Activated CD4-positive, alpha-beta T cell treated with anti-CD3 and anti-CD28 coated beads, Interleukin-2, amount 10 ng/mL, durations not matched to agents 24 days and 14 days (primary cell): ENCODE measurements at regions of chr14 and their contacts with region 1.

Region 1: DNA sequence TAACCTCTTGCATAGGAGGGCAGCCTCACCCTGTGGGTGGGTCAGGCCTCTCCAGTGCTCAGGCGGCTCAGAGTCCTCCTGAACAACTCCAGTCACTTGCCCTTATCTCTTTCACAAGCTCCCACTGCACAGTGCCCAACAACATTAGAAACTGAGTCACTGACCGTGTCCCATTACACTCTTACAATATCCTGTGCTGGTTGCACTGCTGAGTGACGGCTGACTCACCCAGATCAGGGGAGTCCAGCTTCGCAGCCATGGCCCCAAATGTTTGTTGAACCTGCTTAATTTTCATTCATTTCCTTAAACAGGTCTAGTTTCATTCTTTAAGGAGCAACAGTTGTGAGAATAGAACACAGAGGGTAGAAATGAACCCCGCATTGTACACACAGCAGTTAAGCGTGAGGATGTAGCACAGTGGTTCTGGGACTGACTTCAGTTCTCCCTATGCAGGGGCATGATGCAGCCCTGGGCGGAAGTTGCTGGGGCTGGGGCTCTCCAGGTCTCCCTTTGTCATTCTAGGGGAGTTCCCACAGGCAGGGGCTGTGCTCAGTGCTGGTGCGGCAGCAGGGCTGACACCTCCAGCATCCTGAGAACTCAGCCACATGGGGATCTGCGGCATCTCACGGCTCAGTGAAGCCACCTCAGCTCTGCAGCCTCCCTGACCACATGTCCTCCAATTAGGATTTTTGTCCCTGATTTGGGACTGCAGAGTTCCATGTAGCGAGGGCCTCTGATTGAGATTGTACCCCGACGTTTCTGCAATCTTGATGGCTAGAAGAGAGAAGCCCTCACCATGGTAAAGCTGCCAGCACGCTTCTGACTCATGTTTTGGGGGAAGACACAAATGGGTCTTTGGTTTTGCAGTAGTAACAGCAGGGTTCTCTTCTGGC is 16.1 kb downstream of the GPR68 start:
- DNase-seq: peak; percentile 95
- H3K4me3 Mint-ChIP-seq: peak overlapping the region; percentile 78
- H3K27ac Mint-ChIP-seq: peak overlapping the region; percentile 99
- H3K4me1 Mint-ChIP-seq: peaks cover 83% of the 10 kb centered on the region
- H3K27me3 Mint-ChIP-seq: no peaks in the 10 kb centered on the region

Region 2: DNA sequence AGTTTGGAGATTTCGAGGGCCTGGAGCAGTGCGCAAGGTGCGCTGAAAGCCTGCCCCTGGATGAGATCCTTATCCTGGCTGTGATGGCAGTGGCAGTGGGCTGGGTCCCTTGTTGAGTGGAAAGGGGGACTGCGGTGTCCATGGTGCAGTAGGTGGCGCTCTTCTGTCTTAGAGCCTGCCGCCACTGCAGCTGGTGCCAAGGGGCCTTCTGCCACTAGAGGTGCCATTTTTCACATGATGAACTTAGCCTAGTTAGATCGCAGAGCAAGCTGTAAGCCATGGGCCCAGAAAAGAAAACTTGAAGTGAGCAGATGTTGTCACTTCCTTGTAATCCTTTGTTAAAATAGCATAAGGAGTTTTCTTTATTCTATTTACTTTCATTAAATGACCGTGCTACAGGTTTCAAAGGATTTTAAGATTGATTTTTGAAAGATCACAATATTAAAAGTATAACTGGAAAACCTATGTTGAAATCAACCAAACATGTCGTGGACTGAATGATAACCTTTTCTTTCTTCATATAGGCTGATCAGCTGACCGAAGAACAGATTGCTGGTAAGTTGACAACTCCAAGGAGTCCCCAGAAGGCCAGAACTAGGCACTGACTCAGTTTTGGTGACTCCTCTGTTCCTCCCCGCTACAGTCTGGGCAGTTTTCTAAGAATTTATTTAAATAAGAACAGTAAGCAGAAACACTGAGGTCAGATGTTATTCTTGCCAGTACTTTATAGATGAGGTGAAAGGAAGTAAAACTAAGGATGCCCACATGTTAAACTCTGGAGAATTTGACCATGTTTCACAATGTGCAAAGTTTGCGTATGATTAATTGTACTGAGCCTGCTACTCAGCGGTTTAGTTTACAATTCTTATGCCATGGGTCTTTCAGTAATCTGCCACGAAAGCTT is 828.6 kb before region 1 on chr14:
- intact Hi-C with region 1: loop called (anchors 5 kb)
- DNase-seq: peak; percentile 95
- H3K4me3 Mint-ChIP-seq: peak overlapping the region; percentile 97
- H3K27ac Mint-ChIP-seq: peak overlapping the region; percentile 98
- H3K4me1 Mint-ChIP-seq: peaks cover 49% of the 10 kb centered on the region
- H3K27me3 Mint-ChIP-seq: no peaks in the 10 kb centered on the region

Region 3: DNA sequence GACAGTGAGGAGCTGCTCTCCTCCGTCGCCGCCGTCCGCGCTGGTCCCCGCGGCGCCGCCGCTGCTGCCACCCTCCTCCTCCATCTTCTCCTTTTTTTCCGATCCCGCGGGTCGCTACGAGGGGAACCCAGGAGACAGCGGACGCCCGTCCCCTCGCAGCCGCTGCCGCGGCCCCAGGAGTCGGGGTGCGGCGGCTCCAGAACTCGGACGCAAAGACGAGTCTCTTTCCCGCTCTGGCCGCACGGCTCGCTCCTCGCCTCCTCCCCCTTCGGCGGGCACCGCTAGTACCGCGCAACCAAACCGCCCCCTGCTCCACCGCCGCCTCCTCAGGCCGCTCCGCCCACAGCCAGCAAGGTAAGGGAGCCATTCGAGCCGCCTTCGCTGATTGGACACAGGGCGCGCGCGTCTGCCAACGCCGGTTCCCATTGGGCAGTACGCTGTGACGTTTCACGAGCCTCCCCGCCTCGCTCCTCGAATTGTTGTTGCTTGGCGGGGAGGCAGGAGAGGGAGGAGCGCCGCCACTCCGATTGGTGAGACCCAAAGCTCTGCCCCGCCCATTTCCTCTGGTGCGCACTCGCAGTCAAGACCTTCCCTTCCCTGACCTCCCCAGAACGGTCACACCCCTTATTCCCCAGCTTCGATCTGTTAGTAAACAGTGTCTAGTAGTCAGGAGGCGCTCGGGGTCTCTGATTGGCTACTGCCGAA is 167.9 kb before region 1 on chr14 and contains the start of gene RPS6KA5:
- intact Hi-C with region 1: loop called (anchors 1 kb)
- DNase-seq: peak; percentile 100
- H3K4me3 Mint-ChIP-seq: peak within 1 kb of the TSS; percentile 85
- H3K27ac Mint-ChIP-seq: peak within 1 kb of the TSS; percentile 76
- H3K4me1 Mint-ChIP-seq: peaks cover 51% of the 10 kb centered on the region
- H3K27me3 Mint-ChIP-seq: no peaks in the 10 kb centered on the region
- total RNA-seq, gene RPS6KA5: 13.5 and 13.8 TPM in 2 replicates

Region 4: GRCh38 chr14:91207008-91207407 is 21.4 kb before region 1 on chr14:
- intact Hi-C with region 1: loop called (anchors 2 kb)
- DNase-seq: no peak
- H3K4me3 Mint-ChIP-seq: peak overlapping the region; percentile 37
- H3K27ac Mint-ChIP-seq: peak overlapping the region; percentile 34
- H3K4me1 Mint-ChIP-seq: peaks cover 39% of the 10 kb centered on the region
- H3K27me3 Mint-ChIP-seq: no peaks in the 10 kb centered on the region

Region 5: GRCh38 chr14:91261115-91261514 is 32.8 kb after region 1 on chr14:
- intact Hi-C with region 1: loop called (anchors 1 kb)
- DNase-seq: peak; percentile 87
- H3K4me3 Mint-ChIP-seq: no peak overlapping the region
- H3K27ac Mint-ChIP-seq: peak overlapping the region; percentile 85
- H3K4me1 Mint-ChIP-seq: peaks cover 60% of the 10 kb centered on the region
- H3K27me3 Mint-ChIP-seq: no peaks in the 10 kb centered on the region

Region 6: DNA sequence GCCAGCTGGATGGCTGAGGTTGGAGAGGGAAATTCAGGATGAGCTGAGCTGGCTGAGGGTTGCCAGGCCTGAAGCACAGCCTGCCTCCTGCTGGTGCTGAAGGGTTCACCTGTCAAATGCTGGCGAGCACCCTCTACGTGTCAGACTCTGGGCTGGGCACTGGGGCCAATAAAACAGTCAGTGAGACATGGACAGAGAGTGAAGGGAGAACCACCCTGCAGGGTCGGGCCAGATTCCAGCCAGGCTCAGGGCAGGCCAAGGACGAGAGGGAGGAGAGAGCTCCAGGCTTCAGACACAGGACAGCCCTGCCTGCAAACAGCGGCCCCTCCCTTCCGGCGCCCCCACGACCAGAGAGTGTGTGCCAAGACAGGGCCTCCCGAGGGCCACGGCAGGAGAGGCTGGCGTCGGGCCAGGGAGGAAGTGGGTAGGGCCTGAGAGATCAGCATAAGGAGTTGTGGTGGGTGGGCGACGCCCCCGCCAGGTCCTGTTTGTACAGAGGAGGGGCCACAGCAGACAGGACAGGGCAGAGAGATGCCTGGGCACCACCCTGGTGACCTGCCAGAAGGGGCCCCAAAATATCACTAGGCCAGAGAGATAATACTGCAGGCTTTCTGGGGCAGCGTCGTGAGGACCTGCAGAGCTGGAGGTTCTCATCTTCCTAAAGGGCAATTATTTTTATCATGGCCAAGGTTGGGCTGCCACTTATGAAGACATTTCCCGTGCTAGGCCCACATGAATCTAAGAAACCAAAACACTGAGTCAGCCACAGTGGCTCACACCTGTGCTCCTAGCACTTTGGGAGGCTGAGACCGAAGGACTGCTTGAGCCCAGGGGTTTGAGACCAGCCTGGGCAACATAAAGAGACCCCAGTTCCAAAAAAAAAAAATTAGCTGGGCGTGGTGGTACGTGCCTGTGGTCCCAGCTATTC is 89.3 kb after region 1 on chr14:
- intact Hi-C with region 1: loop called (anchors 5 kb)
- DNase-seq: peak; percentile 90
- H3K4me3 Mint-ChIP-seq: peak overlapping the region; percentile 82
- H3K27ac Mint-ChIP-seq: peak overlapping the region; percentile 97
- H3K4me1 Mint-ChIP-seq: peaks cover 54% of the 10 kb centered on the region
- H3K27me3 Mint-ChIP-seq: no peaks in the 10 kb centered on the region

Region 7: DNA sequence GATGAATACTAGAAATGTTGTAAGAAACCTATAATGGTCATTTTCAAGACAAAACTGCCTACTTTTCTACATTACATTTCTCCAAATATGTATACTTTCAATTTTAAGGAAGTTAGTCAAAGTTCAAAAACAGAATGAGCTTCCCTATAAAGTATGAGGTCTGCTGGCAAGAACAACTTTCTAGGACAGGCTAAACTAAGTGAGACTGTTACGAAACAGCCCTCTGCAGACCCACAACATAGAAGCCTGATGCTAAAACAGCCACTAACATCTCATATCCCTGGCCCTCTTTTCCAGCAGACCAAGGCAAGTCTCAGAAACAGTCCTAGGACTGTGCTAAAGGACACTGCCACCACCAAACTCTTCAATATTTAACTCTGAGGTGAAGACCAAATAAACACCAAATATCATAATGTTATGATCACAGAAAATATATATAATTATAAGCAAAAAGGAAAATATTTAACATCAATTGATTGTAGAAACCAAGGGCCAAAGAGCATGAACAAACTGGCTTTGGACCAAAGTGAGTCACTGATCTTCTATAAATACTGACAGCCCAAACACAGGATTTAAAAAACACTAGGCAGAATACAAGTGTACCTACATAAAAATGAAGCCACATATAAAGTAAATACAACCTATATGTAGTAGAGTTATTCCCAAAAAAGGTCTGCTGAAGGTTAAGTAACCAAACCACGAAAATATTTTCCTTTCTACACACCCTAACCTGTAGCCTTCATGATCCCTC is 254.1 kb after region 1 on chr14:
- intact Hi-C with region 1: no loop called
- DNase-seq: no peak
- H3K4me3 Mint-ChIP-seq: no peak overlapping the region
- H3K27ac Mint-ChIP-seq: no peak overlapping the region
- H3K4me1 Mint-ChIP-seq: peaks cover 39% of the 10 kb centered on the region
- H3K27me3 Mint-ChIP-seq: no peaks in the 10 kb centered on the region